ENCODE measurements at regions of chr15 and their contacts with region 1.

Region 1: DNA sequence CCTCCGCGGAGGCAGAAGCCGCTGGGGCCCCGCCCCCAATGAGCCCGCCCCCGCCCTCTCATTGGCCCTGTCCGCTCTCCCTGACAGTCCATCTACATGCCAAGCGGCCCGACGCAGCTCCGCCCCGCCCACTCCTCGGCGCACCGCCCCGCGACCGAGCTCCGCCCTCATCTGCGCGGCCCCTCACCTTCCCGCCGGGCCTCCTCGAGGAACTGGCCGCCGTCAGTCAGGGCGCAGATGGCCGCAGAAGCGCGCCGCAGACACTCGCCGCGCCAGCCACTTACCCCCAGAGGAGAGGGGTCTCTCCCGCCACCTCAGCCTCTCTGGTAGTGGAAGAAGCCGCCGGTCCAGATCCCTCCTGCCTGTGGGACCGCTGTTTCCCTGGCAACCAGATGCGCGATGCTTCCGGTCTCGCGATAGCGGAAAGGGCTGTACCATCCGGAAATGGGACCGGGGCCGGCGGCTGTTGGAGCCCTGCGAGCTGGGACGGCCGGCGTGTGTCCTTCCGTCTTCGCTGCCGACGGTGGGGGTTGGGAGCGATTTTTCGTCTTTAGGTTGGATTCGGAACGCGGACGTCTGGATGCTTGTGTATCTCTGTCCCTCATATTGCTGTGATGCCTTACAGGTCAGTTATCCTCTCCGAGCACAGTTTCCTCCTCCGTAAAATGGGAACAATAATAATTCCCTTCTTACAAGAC is at the start of gene FSIP1:
- DNase-seq: peak; percentile 90
- H3K4me3 ChIP-seq: peak within 1 kb of the TSS; percentile 78
- CTCF ChIP-seq: no peak

Region 2: DNA sequence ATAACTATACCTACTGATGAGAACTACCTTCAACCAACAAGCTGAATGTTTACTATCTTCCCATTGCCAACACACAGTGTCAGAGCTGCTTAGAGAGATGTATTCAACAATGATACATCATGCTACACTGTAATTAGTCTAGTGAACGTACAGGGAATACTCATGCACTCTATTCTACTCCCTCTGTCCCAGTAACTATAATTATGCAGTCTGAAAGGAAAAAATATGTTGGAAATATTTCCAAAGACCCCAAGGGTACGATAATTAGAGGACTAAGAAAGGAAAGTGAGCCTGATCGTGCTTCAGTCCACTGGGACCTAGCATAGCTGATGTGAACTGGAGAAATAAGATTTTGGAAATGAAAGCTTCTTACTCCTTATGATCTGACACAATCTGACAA is 36.9 kb after region 1 on chr15:
- in situ Hi-C with region 1: no loop called
- DNase-seq: no peak
- H3K4me3 ChIP-seq: no peak overlapping the region
- CTCF ChIP-seq: no peak

Region 3: DNA sequence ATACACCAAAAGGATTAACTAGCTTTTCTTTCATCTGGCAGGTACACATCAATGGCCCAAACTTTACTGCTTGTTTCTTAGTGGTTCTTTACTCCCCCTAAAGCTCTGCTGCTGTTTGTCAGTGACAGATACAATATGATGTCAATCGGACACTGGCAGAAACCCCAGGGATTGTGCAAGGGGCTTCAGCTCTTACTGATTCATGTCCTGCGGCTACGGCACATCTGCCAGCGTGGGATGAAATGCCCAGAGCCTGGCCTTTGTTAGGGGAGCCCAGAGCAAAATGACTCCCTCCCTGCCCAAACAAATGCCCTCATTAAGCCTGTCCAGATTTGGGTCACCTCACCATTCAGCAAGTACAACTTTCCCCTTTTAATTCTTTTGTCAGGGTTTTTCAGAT is 228.1 kb after region 1 on chr15:
- in situ Hi-C with region 1: loop called (anchors 25 kb)
- DNase-seq: peak; percentile 64
- H3K4me3 ChIP-seq: no peak overlapping the region
- CTCF ChIP-seq: no peak